Cardiac septum (tissue), 1 donor: ENCODE measurements at regions of chr6 and their contacts with region 1.

Region 1: DNA sequence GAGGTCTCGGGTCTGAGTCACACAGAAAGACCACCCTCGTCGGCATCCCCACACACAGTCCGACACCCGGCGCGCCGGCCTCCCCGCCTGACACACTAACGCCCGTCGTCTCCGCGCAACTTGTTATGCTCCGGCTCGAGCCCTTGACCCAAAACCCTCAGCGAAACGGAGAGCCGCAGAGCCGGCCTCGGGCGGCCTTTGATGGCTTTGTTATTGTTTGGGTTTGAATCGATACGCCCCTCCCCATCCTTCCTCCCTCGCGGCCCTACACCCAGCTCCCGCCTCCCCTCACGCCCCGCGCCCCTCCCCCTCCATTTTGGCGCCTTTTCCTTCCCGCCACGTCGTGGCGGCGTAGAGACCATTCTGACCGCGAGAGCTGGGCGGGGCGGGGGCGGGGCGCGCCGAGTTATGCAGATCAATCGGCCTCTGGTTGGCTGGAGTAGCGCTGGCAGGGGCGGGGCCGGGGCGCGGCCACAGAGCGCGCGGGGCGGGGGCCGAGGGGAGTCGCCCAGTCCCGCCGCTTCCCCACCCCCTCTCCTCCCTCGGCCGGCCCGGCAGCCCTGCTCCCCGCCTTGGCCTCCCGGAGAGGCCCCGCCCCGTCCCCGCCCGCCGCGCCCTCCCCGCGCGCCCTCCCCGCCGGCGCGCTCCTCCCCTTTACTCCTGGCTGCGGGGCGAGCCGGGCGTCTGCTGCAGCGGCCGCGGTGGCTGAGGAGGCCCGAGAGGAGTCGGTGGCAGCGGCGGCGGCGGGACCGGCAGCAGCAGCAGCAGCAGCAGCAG is at the start of gene PIM1:
- DNase-seq: peak; percentile 100
- total RNA-seq, gene PIM1: 16.6 TPM

Region 2: DNA sequence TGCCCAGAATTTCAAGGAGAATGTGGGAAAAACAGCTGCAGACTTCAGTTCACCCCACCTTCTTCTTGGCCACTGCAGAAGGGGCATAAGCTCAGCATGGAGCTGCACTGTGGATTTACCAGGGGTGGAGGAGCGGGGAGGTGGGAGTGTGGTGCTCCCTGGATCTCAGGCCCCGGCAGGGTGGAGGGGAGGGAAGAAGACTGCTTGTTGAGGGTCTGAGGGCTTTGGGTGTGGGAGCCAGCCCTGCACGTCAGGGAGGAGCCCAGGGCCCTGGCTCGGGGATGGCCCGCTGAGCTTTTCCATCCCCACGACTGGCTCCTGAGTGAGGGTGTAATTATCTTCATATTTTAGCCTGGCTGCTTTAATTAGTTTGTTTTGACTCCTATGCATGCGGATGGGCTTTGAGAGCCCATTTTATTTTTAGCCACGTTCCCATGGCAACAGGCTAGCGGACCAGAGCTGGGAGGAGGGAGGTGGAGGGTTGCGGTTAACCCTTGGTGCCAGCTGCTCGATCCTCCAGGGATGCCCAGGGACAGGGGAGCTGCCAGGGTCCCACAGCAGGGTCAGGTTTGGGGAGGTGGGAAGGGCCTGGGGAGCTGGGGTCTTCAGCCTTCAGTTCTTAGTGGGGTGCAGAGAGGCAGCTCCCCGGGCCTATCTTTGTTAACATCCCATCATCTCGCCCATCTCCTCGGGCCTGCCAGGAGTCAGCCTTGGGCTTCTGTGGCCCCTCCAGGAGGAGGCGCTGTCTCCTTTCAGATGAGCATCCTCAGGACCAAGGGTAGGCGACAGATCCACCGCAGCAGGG is 403.9 kb before region 1 on chr6:
- intact Hi-C with region 1: loop called (anchors 10 kb)
- DNase-seq: peak; percentile 94

Region 3: GRCh38 chr6:37018198-37019064 is 151.3 kb before region 1 on chr6:
- intact Hi-C with region 1: loop called (anchors 2 kb)
- DNase-seq: peak; percentile 94

Region 4: GRCh38 chr6:37051138-37052026 is 118.3 kb before region 1 on chr6:
- intact Hi-C with region 1: loop called (anchors 1 kb)
- DNase-seq: peak; percentile 96

Region 5: DNA sequence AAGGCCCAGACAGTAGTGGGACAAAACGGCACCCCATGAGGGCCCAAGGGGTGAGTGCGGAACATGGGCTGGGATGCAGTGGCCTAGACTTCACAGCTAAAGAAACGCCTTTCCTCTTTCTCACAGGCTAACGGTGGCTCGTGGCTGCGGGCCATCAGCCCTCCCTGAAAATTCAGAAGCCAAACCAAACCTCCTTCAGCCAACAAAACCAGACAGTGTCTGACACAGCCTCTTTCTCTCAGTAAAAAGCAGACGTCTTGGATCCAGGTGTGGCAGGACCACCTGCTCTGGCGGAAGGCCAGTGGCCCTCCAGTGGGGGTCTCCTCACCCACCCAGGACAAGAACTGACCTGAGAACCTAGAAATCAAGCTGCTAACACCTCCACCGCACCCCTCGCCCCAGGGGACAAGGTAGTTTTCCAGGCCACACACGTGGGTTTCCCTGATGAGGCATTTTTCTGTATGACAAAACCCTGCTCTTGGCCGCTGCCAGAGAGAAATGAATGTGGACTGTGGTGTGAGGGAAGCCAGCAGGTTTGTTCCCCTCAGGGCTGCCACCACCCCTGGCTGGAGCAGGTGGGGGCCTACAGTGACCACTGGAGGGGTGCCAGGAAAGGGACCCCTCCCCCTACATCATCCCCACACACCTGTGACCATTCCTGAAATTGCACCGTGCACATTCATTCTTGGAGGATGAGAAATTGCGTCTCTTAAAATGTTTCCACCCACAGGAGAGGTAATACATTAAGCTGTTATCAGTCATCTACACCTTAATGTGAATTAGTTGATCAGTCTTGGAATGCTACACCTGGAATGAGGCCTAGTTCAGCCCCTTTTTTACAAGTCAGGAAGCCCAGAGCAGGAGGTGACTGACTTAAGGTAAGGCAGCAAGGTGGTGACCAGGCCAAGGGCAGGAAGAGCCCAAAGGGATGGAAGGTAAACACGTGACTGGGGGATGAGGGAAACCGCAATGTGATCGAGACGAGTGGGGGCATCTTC is 76.5 kb before region 1 on chr6:
- intact Hi-C with region 1: no loop called
- DNase-seq: no peak

Region 6: GRCh38 chr6:37137201-37138090 is 32.2 kb before region 1 on chr6:
- intact Hi-C with region 1: loop called (anchors 2 kb)
- DNase-seq: no peak

Region 7: GRCh38 chr6:37302086-37302686 is 132.5 kb after region 1 on chr6:
- intact Hi-C with region 1: no loop called
- DNase-seq: no peak

Region 8: GRCh38 chr6:37347670-37348111 is 178.0 kb after region 1 on chr6:
- intact Hi-C with region 1: no loop called
- DNase-seq: no peak

Region 9: DNA sequence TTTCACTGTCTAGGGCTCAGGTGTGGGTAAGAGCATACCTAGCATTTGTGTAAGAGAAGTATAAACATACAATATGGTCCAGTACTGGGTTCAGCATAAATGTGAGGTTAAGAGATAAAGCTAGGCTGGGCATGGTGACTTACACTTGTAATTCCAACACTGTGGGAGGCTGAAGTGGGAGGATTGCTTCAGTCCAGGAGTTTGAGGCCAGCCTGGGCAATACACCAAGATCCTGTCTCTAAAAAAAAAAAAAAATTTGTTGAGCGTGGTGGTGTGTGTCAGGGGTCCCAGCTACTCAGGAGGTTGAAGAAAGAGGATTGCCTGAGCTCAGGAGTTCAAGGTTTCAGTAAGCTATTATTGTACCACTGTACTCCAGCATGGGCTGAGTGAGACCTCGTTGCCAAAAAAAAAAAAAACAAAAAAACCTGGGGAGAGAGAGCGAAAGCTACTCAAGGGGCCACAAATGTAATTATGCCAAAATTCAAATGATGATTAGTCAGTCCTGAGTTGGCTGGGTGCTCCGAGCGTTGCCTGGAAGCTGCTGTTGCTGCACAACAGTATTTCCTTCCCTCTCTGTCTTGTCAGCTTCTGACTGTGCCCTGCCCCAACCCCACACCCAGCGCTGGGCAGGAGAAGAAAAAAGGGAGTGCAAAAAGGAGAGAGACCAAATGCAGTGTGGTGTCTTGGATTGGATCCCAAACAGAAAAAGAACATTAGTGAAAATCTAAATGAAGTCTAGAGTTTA is 287.3 kb after region 1 on chr6:
- intact Hi-C with region 1: no loop called
- DNase-seq: no peak